ENCODE measurements at regions of chr10 and their contacts with region 1.

Region 1: GRCh38 chr10:68938119-68938518 is 17.9 kb upstream of the DDX21 start:
- ATAC-seq: peak in 1 of 8 experiments; percentile 27
- H3K4me3 ChIP-seq: no peak overlapping the region
- H3K27ac ChIP-seq: no peak overlapping the region
- H3K4me1 ChIP-seq: no peaks in the 10 kb centered on the region

Region 2: GRCh38 chr10:68752711-68753350 is 185.3 kb before region 1 on chr10:
- in situ Hi-C with region 1: loop called in 1 of 9 experiments (anchors 25 kb)
- ATAC-seq: no peak
- H3K4me3 ChIP-seq: no peak overlapping the region
- H3K27ac ChIP-seq: no peak overlapping the region
- H3K4me1 ChIP-seq: no peaks in the 10 kb centered on the region

Region 3: GRCh38 chr10:69080226-69080625 is 142.1 kb after region 1 on chr10:
- in situ Hi-C with region 1: no loop called
- ATAC-seq: no peak
- H3K4me3 ChIP-seq: no peak overlapping the region
- H3K27ac ChIP-seq: no peak overlapping the region
- H3K4me1 ChIP-seq: no peaks in the 10 kb centered on the region

Measured in motor neuron (in vitro differentiated cells).